ENCODE measurements at regions of chr2 and their contacts with region 1.

Region 1: DNA sequence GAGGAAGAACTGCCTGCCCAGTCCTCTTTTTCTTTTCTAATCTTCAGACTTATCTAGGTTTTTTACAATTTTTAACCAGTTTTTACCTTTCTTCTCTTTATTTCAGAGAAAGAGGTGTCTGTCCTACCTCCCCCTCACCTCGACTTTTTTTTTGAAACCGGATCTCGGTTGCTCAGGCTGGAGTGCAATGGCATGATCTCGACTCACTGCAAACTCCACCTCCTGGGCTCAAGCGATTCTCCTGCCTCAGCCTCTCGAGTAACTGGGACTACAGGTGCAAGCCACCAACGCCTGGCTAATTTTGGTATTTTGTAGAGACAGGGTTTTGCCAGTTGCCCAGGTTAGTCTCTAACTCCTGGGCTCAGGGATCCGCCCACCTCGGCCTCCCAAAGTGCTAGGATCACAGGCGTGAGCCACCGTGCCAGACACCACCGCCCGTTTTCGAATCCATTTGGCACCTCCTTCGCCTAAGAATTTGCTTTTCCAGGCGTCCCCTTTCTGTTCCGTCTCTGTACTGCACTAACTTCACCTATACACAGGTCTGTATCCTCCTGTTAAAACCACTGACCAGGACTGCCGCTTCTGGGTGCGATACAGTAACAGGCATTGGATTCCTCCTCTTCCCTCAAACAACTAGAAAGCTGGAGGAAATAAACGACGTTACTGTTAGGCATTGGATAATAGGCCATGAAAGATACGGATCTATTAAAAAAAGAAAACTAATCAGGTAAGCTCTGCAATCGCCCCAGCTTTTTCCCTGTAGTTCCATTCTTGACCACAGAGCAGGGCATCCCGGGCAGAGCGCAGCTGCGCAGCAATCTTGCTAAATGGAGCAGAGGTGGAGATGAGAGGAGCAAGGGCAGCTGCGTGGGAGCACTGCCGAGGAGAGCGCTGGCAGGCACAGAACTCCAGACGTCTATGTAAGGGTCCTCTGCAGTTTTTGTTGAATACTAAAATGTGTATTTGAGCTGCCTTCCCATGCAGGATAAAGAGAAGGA is 69.9 kb downstream of the ZC3H6 start:
- DNase-seq: no peak
- H3K4me3 ChIP-seq: no peak overlapping the region
- H3K27ac ChIP-seq: no peak overlapping the region
- H3K4me1 ChIP-seq: no peaks in the 10 kb centered on the region
- H3K27me3 ChIP-seq: no peaks in the 10 kb centered on the region
- CTCF ChIP-seq: no peak
- POLR2A ChIP-seq: no peak

Region 2: GRCh38 chr2:112204411-112204810 is 140.9 kb before region 1 on chr2:
- CTCF ChIA-PET with region 1: no interaction called
- POLR2A ChIA-PET with region 1: no interaction called
- dilution Hi-C with region 1: no loop called
- intact Hi-C with region 1: loop called (anchors 5 kb)
- DNase-seq: peak; percentile 34
- H3K4me3 ChIP-seq: no peak overlapping the region
- H3K27ac ChIP-seq: no peak overlapping the region
- H3K4me1 ChIP-seq: peaks cover 10% of the 10 kb centered on the region
- H3K27me3 ChIP-seq: no peaks in the 10 kb centered on the region
- CTCF ChIP-seq: no peak
- POLR2A ChIP-seq: no peak

Measured in endothelial cell of umbilical vein (primary cell).